B cell (primary cell): ENCODE measurements at regions of chr16 and their contacts with region 1.

Region 1: DNA sequence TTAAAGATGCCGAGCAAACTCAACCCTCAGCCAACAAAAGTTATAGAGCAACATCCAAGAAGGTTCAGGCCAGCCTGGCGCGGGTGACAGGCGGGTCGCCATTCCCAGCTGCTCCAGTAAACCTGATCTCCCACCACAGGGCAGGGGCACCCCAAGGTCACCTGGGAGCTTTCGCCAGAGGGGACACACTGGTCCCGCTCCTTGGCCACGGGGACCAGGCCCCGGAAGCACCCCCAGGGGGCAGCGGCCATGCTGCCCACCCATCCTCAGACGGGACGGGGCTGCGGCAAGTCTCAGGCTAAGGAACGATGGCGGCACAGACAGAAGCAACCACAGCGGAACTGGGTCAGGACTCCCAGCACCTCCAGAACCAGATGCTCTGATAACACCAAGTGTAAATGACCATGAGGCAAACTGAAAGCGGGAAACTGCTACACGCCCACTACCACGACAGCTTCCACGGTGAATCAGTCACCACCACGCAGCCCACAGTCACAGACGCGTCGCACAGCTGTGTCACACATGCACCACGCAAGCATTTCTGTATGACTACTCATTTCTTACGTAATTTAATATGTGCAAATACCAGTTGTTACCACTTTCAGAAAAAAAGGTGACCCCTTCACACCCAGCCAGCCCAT is 14.1 kb upstream of the CCDC154 start:
- DNase-seq: no peak
- ATAC-seq: peak; percentile 60
- H3K4me3 ChIP-seq: peak overlapping the region in 3 of 5 experiments; percentile 38 to 51 (median 50)
- H3K4me3 Mint-ChIP-seq: peak overlapping the region; percentile 81
- H3K27ac ChIP-seq: peak overlapping the region; percentile 98
- H3K27ac Mint-ChIP-seq: peak overlapping the region; percentile 97
- H3K4me1 ChIP-seq: peaks cover 31 to 34% of the 10 kb centered on the region in 2 donors
- H3K4me1 Mint-ChIP-seq: peaks cover 28% of the 10 kb centered on the region
- H3K27me3 ChIP-seq: no peaks in the 10 kb centered on the region
- H3K27me3 Mint-ChIP-seq: no peaks in the 10 kb centered on the region
- CTCF ChIP-seq: no peak

Region 2: DNA sequence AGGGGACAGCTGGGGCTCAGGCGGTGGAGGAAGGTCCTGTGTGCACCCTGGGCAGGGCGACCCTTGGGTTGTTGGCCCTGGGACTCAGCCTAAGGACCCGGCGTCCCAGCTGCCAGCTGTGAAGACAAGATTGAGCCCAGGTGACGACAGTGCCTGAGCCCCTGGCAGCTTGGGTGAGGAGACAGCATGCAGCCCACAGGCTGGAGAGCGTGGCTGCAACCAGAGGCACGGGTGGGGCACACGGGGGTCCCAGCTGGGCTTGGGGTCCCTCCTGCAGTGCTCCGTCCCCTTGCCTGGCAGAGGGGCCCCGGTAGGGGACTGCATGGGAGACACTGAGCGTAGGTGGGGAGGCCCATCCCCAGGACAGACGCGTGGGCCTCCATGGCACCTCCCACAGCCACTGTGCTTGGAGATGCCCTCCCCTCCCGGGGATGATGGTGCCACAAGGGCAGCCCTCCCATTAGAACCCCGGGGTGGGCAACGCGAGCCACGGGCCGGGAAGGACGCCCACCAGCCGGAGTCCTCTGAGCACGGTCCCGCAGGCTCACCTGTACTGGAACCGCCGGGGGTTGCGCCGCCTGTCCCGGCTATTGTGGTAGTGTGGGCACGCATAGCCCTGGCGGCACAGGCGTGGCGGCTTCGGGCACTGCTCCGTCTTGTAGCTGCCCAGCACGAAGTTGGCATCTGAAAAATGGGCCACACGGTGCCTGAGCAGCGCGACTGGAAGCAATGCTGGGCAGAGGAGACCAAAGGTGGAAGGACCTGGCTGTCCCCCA is 59.4 kb before region 1 on chr16:
- CTCF ChIA-PET with region 1: no interaction called
- POLR2A ChIA-PET with region 1: no interaction called
- intact Hi-C with region 1: no loop called
- DNase-seq: no peak
- ATAC-seq: no peak
- H3K4me3 ChIP-seq: no peak overlapping the region
- H3K4me3 Mint-ChIP-seq: no peak overlapping the region
- H3K27ac ChIP-seq: no peak overlapping the region
- H3K27ac Mint-ChIP-seq: no peak overlapping the region
- H3K4me1 ChIP-seq: no peaks in the 10 kb centered on the region
- H3K4me1 Mint-ChIP-seq: peaks cover 3% of the 10 kb centered on the region
- H3K27me3 ChIP-seq: no peaks in the 10 kb centered on the region
- H3K27me3 Mint-ChIP-seq: no peaks in the 10 kb centered on the region
- CTCF ChIP-seq: no peak

Region 3: GRCh38 chr16:1469693-1470201 is 11.3 kb after region 1 on chr16:
- CTCF ChIA-PET with region 1: interaction called, 3 read pairs
- POLR2A ChIA-PET with region 1: interaction called, 9 read pairs
- intact Hi-C with region 1: loop called (anchors 1 kb)
- DNase-seq: peak; percentile 62
- ATAC-seq: peak; percentile 65
- H3K4me3 ChIP-seq: peak overlapping the region in 2 of 5 experiments; percentile 5 to 31
- H3K4me3 Mint-ChIP-seq: peak overlapping the region; percentile 83
- H3K27ac ChIP-seq: peak overlapping the region; percentile 76 to 96
- H3K27ac Mint-ChIP-seq: peak overlapping the region; percentile 94
- H3K4me1 ChIP-seq: peaks cover 38 to 57% of the 10 kb centered on the region in 2 donors
- H3K4me1 Mint-ChIP-seq: peaks cover 52% of the 10 kb centered on the region
- H3K27me3 ChIP-seq: no peaks in the 10 kb centered on the region
- H3K27me3 Mint-ChIP-seq: no peaks in the 10 kb centered on the region
- CTCF ChIP-seq: no peak

Region 4: GRCh38 chr16:1474796-1475551 is 16.5 kb after region 1 on chr16 and contains the start of gene CLCN7:
- CTCF ChIA-PET with region 1: interaction called, 4 read pairs
- POLR2A ChIA-PET with region 1: interaction called, 12 read pairs
- intact Hi-C with region 1: loop called (anchors 1 kb)
- DNase-seq: peak; percentile 95
- ATAC-seq: peak; percentile 79
- H3K4me3 ChIP-seq: peak within 1 kb of the TSS; percentile 57 to 80 (median 70)
- H3K4me3 Mint-ChIP-seq: peak within 1 kb of the TSS; percentile 88
- H3K27ac ChIP-seq: peak within 1 kb of the TSS; percentile 88 to 96
- H3K27ac Mint-ChIP-seq: peak within 1 kb of the TSS; percentile 93
- H3K4me1 ChIP-seq: peaks cover 50 to 62% of the 10 kb centered on the region in 2 donors
- H3K4me1 Mint-ChIP-seq: peaks cover 54% of the 10 kb centered on the region
- H3K27me3 ChIP-seq: no peaks in the 10 kb centered on the region
- H3K27me3 Mint-ChIP-seq: no peaks in the 10 kb centered on the region
- CTCF ChIP-seq: no peak
- total RNA-seq, gene CLCN7: 274 and 286 TPM in 2 replicates

Region 5: GRCh38 chr16:1481906-1482835 is 23.7 kb after region 1 on chr16:
- CTCF ChIA-PET with region 1: no interaction called
- POLR2A ChIA-PET with region 1: interaction called, 12 read pairs
- intact Hi-C with region 1: loop called (anchors 1 kb)
- DNase-seq: no peak
- ATAC-seq: no peak
- H3K4me3 ChIP-seq: no peak overlapping the region
- H3K4me3 Mint-ChIP-seq: peak overlapping the region; percentile 4
- H3K27ac ChIP-seq: peak overlapping the region; percentile 41 to 95
- H3K27ac Mint-ChIP-seq: peak overlapping the region; percentile 48
- H3K4me1 ChIP-seq: peaks cover 24 to 37% of the 10 kb centered on the region in 2 donors
- H3K4me1 Mint-ChIP-seq: peaks cover 35% of the 10 kb centered on the region
- H3K27me3 ChIP-seq: no peaks in the 10 kb centered on the region
- H3K27me3 Mint-ChIP-seq: no peaks in the 10 kb centered on the region
- CTCF ChIP-seq: no peak

Region 6: DNA sequence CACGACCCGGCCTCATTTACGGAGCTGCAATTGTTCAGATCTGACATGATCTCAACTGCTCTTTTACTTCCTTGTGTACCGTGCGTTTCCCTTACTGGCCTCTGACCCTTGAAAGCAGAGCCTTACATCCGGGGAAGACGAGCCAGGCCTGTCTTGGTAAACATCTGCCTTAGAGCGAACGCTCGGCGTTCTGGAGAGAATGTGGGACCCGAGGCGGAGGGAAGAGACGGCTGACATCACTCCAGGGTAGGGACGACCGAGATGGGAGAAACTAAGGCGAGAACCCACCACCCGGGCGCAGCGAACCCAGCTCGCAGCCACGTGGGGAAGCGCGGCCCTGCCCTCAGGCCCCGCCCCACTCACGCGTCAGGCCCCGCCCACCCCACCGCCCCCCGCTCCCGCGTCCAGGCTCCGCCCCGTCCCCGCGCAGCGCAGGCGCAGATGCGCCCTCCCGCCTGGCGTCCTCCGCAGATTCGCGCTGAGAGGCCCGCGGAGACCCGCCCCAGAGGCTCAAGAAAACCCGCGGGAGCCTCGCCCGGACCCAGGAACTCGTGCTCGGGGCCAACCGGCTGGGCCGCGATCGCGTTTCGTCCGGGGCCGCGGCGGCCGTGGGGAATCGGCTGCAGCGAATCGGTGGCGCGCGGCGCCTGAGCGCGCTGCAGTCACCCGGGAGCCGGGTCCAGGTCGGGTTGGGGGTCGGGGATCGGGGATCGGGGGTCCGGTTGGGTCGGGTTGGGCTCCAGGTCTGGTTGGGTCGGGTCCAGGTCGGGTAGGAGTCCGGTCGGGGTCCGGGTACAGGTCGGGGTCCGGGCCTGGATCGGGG is 34.7 kb after region 1 on chr16 and contains the start of gene TELO2:
- CTCF ChIA-PET with region 1: interaction called, 4 read pairs
- POLR2A ChIA-PET with region 1: interaction called, 16 read pairs
- intact Hi-C with region 1: loop called (anchors 2 kb)
- DNase-seq: peak; percentile 92
- ATAC-seq: peak; percentile 89
- H3K4me3 ChIP-seq: peak within 1 kb of the TSS; percentile 36 to 87 (median 75)
- H3K4me3 Mint-ChIP-seq: peak within 1 kb of the TSS; percentile 97
- H3K27ac ChIP-seq: peak within 1 kb of the TSS; percentile 95 to 96
- H3K27ac Mint-ChIP-seq: peak within 1 kb of the TSS; percentile 99
- H3K4me1 ChIP-seq: peaks cover 17 to 25% of the 10 kb centered on the region in 2 donors
- H3K4me1 Mint-ChIP-seq: peaks cover 17% of the 10 kb centered on the region
- H3K27me3 ChIP-seq: no peaks in the 10 kb centered on the region
- H3K27me3 Mint-ChIP-seq: no peaks in the 10 kb centered on the region
- CTCF ChIP-seq: no peak
- total RNA-seq, gene TELO2: 81.9 and 88.4 TPM in 2 replicates

Region 7: DNA sequence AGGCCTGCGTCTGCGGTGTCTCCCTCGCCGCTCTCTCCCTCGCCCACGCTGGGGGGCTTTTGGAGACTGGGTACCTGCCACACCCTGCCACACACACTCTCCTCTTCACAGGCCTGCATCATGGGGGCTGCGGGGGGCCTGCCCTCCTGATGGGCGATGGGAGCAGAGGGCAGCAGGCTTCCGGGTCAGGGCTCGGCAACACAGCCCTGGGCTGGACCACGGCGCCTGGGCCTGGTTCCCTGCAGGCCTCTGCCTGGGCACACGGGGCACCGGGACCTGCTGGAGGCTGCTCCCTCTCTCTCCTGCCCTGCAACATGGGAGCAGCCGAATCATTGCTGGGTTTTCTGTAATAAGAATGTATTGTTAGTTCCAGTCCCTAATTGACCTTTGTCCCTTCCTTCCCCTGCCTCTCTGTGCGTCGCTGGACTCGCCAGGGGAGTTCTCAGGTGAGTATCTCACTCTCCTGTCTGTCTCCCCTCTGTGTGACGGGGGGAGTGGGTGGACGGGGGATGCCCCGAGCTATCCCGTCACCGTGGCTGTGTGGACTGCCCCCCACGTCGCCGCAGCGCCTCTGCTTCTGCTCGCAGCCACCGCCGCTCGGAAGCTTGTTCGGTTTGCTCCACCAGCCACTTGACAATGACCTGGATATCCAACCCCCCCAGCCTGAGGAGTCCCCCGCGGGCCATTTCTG is 299.4 kb after region 1 on chr16:
- CTCF ChIA-PET with region 1: no interaction called
- POLR2A ChIA-PET with region 1: no interaction called
- intact Hi-C with region 1: no loop called
- DNase-seq: no peak
- ATAC-seq: no peak
- H3K4me3 ChIP-seq: no peak overlapping the region
- H3K4me3 Mint-ChIP-seq: no peak overlapping the region
- H3K27ac ChIP-seq: no peak overlapping the region
- H3K27ac Mint-ChIP-seq: no peak overlapping the region
- H3K4me1 ChIP-seq: no peaks in the 10 kb centered on the region
- H3K4me1 Mint-ChIP-seq: no peaks in the 10 kb centered on the region
- H3K27me3 ChIP-seq: no peaks in the 10 kb centered on the region
- H3K27me3 Mint-ChIP-seq: no peaks in the 10 kb centered on the region
- CTCF ChIP-seq: no peak